ENCODE measurements at regions of chr11 and their contacts with region 1.

Region 1: DNA sequence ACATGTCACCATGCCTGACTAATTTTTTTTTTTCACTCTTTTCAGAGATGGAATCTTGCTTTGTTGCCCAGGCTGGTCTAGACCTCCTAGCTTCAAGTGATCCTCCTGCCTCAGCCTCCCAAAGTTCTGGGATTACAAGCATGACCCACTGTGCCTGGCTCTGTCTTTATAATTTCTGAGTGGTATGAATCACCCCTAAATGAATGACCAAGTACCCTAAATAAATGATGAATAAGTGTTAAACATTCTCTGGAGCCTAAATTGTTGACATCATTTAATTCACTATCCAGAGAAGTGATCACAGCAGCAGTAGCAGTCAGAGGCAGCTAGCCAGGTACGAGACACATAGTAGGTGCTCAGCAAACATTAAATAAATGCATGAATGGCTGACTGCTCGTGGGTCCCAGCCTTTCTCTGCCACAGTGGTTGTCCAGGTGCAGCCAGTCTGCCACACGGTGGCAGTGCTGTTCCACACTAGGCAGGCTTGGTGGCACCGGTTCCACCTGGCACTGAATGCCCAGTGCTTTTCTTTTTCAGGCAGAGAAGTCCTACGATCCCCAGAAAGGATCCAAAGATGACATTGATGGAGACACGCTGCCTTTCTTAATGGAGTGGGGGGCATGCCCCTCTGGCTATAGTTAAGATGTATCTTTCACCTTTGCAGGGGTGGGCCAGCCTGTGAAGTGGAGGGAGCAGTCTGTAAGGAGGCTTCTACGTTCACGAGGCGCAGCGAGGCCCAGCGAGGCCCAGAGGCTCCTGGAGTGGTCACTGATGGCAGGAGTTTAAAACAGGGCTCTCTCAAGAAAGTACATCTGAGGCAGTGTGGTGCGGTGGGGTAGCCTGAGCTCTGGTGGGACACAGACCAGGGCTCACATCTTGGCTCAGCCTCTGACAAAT is 8.7 kb upstream of the TTC12 start:
- DNase-seq: peak; percentile 92
- H3K4me3 ChIP-seq: no peak overlapping the region
- H3K27ac ChIP-seq: no peak overlapping the region
- H3K4me1 ChIP-seq: peaks cover 0 to 5% (median 0%) of the 10 kb centered on the region in 4 donors
- H3K27me3 ChIP-seq: no peaks in the 10 kb centered on the region
- CTCF ChIP-seq: peak; percentile 87 to 95 (median 90)
- EP300 ChIP-seq: no peak
- POLR2A ChIP-seq: no peak

Region 2: GRCh38 chr11:113532697-113533424 is 227.2 kb after region 1 on chr11:
- intact Hi-C with region 1: loop called (anchors 2 kb)
- DNase-seq: no peak
- H3K4me3 ChIP-seq: no peak overlapping the region
- H3K27ac ChIP-seq: no peak overlapping the region
- H3K4me1 ChIP-seq: peaks cover 0 to 6% (median 0%) of the 10 kb centered on the region in 4 donors
- H3K27me3 ChIP-seq: peaks cover 0 to 15% (median 0%) of the 10 kb centered on the region in 4 donors
- CTCF ChIP-seq: peak; percentile 67 to 86 (median 75)
- EP300 ChIP-seq: no peak
- POLR2A ChIP-seq: no peak

Region 3: DNA sequence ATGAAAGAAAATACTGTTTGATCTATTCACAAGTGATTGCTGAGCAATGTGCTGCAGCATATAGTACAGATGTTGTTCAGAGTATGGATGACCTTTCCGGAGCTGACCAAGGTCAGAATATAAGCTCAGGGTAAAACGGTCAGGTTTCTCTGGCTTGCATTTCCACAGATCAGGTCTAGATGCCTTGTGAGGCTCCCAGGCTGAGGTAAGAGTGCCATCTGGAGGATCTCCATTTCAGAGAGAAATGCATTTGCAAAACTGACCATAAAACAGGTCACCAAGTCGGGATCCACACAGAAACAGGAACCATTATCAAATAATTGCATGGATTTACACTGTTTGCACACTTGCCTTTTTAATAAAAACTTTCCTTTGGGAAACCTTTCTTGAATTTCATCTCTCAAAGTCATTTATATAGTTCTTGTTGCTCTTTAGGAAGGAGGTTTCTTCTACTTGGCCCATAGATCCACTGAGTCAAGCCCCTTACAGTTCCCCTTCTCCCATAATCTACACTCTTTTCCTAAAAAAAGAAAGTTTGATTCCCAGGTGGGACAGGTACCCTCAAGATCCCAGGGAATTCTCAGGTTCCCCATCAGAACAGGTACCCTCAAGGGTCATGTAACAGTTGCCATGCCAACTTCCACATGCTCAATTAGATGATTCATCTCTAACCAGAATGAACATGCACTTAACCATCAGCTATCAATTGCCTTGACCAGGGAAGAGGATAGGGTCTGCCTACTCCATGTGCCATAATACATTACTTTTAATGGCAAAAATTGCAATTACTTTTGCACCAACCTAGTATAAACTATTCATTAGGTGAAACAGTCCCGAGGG is 425.4 kb after region 1 on chr11:
- intact Hi-C with region 1: loop called (anchors 2 kb)
- DNase-seq: no peak
- H3K4me3 ChIP-seq: no peak overlapping the region
- H3K27ac ChIP-seq: no peak overlapping the region
- H3K4me1 ChIP-seq: peaks cover 0 to 9% (median 0%) of the 10 kb centered on the region in 4 donors
- H3K27me3 ChIP-seq: no peaks in the 10 kb centered on the region
- CTCF ChIP-seq: peak; percentile 60 to 65 (median 60)
- EP300 ChIP-seq: no peak
- POLR2A ChIP-seq: no peak

Region 4: GRCh38 chr11:113796663-113797259 is 491.1 kb after region 1 on chr11:
- intact Hi-C with region 1: loop called (anchors 5 kb)
- DNase-seq: no peak
- H3K4me3 ChIP-seq: no peak overlapping the region
- H3K27ac ChIP-seq: no peak overlapping the region
- H3K4me1 ChIP-seq: no peaks in the 10 kb centered on the region
- H3K27me3 ChIP-seq: no peaks in the 10 kb centered on the region
- CTCF ChIP-seq: peak; percentile 50 to 72 (median 56)
- EP300 ChIP-seq: no peak
- POLR2A ChIP-seq: no peak

Measured in esophagus muscularis mucosa (tissue), 4 donors.